Activated CD4-positive, alpha-beta T cell treated with anti-CD3 and anti-CD28 coated beads, Interleukin-2, amount 10 ng/mL, durations not matched to agents 7 days and 5 days (primary cell): ENCODE measurements at regions of chr11 and their contacts with region 1.

Region 1: DNA sequence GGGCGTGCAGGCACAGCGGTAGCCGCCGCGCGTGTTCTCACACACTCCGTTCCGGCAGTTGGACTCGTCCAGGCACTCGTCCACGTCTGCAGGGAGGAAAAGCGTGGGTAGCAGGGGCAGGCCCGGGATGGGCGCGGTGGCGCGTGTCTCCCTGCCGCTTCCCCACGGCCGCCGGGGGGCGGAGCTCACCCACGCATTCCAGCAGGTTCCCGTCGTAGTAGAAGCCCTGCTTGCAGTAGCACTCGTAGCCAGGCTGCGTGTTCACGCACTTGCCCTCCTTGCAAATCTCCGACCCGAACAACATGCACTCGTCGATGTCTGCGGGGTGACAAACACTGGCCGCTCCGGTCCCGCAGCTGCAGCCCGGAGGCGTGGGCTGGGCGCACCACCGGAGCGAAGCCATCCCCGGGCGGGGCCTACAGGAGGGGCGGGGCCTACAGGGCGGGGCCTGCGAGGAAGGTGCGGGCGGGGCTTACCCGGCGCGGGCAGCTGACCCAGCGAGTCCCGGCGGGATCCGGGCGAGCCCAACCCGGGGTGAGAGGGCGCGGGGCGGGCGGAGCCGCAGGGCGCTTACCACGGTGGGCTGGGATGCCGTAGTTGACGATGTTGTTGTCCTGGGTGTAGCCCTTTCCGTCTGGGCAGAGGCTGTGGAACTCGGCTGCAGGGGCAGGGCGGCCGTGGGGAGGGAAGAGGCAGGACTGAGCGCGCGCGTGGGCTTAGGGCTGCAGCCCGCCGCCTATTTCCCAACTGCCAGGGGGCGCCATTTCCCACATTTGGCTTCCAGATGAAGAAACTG is 15.6 kb downstream of the SCYL1 start:
- DNase-seq: peak; percentile 85
- H3K4me3 Mint-ChIP-seq: peak overlapping the region; percentile 78
- H3K27ac Mint-ChIP-seq: peak overlapping the region; percentile 88
- H3K4me1 Mint-ChIP-seq: peaks cover 19% of the 10 kb centered on the region
- H3K27me3 Mint-ChIP-seq: no peaks in the 10 kb centered on the region

Region 2: DNA sequence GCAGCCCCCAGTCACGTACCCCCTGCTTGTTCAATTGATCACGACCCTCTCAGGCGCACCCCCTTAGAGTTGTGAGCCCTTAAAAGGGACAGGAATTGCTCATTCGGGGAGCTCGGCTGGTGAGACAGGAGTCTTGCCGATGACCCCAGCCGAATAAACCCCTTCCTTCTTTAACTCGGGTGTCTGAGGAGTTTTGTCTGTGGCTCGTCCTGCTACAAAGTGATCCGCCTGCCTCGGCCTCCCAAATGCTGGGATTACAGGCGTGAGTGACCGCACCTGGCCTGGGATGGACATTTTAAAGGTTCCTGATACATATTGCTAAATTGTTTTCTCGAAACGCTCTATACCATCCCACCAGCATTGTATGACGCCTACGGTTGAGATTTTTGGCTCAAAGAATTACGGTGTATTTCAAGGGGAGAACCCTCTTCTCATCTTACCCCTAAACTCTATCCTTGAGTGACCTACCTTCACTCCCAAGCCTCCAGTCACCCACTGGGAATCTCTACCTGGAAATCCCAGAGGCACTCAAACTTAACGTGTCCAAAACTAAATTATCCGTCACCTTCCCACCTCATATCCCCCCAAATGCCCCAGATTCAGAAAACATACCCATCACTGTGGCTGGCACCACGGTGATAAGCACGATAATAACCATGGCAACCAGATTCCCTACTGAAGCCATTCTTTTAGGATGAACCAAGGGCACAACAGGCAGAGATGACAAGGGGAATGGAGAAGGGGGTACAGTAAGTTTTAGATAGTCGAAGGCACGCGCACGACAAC is 279.5 kb before region 1 on chr11:
- CTCF ChIA-PET with region 1: no interaction called
- POLR2A ChIA-PET with region 1: no interaction called
- DNase-seq: no peak
- H3K4me3 Mint-ChIP-seq: peak overlapping the region; percentile 97
- H3K27ac Mint-ChIP-seq: peak overlapping the region; percentile 95
- H3K4me1 Mint-ChIP-seq: peaks cover 57% of the 10 kb centered on the region
- H3K27me3 Mint-ChIP-seq: no peaks in the 10 kb centered on the region

Region 3: DNA sequence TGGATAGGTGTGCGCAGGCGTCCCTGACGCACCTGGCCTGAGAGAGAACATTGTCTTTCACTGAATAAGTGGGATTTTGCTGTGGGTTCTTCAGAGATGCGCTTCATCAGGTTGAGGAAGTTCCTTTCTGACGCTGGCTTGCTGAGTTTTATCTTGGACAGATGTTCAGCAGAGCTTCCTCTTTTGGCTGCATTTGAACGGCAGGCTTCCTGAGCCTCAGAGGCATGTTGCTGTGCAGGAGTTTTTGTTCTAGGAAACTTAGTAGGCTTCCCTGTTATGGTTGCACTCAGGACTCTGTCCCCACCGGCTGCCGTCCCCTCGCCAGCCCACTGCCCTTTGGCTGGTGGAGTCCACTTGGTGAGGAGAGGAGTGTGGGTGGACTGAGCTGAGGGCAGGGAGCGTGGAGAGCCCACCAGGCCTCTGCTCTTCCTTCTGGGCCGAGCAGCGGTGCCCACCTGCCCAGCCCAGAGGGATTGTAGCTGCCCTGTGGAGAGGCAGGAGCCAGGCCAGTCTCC is 136.8 kb before region 1 on chr11:
- CTCF ChIA-PET with region 1: no interaction called
- POLR2A ChIA-PET with region 1: no interaction called
- DNase-seq: no peak
- H3K4me3 Mint-ChIP-seq: no peak overlapping the region
- H3K27ac Mint-ChIP-seq: no peak overlapping the region
- H3K4me1 Mint-ChIP-seq: peaks cover 6% of the 10 kb centered on the region
- H3K27me3 Mint-ChIP-seq: no peaks in the 10 kb centered on the region

Region 4: DNA sequence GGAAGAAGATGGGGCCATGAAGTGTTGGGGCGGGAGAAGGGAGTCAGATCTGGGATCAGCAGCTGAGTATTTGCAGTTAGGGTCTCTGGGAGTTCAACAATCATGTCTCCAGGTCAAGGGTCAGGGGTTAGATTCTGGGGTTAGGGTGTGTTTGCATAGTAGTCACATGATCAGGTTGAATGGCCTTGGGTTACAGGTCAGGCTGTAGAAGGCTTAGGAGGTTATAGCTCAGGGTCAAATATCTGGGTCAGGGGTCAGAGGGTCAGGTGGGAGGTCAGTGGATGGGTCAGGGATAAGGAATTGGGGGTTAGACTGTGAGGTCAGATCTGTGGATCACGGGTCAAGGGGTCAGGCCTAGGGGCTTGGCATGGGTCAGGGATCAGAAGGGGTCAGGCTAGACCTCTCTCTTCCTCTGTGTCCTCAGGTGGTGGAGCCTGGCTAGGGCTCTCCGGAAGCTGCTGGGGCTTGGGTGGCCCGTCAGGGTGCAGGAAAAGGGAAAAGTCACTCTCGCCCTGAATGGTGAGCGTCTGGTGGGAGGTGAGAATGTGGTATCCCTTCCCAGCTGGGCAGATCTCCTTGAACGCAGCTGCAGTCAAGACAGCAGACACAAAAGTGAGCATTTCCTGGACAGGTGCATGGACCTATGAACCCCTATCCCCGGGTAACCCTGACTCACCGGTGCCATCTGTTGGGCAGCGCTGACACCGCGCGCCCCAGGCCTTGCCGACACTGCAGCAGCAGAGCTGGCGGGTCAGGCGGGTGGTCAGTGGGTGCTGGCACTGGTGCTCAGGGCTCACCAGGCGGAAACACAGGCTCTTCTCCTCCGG is 11.3 kb after region 1 on chr11:
- CTCF ChIA-PET with region 1: interaction called, 34 read pairs
- POLR2A ChIA-PET with region 1: interaction called, 3 read pairs
- DNase-seq: peak; percentile 71
- H3K4me3 Mint-ChIP-seq: no peak overlapping the region
- H3K27ac Mint-ChIP-seq: peak overlapping the region; percentile 62
- H3K4me1 Mint-ChIP-seq: peaks cover 75% of the 10 kb centered on the region
- H3K27me3 Mint-ChIP-seq: no peaks in the 10 kb centered on the region

Region 5: GRCh38 chr11:65569973-65570918 is 29.8 kb after region 1 on chr11 and contains the start of gene ZNRD2:
- CTCF ChIA-PET with region 1: interaction called, 66 read pairs
- POLR2A ChIA-PET with region 1: no interaction called
- DNase-seq: peak; percentile 98
- H3K4me3 Mint-ChIP-seq: peak within 1 kb of the TSS; percentile 99
- H3K27ac Mint-ChIP-seq: peak within 1 kb of the TSS; percentile 99
- H3K4me1 Mint-ChIP-seq: peaks cover 58% of the 10 kb centered on the region
- H3K27me3 Mint-ChIP-seq: no peaks in the 10 kb centered on the region
- total RNA-seq, gene ZNRD2: 32.4 to 35.4 TPM

Region 6: GRCh38 chr11:65588199-65589054 is 47.9 kb after region 1 on chr11:
- CTCF ChIA-PET with region 1: interaction called, 37 read pairs
- POLR2A ChIA-PET with region 1: no interaction called
- DNase-seq: peak; percentile 82
- H3K4me3 Mint-ChIP-seq: peak overlapping the region; percentile 26
- H3K27ac Mint-ChIP-seq: peak overlapping the region; percentile 86
- H3K4me1 Mint-ChIP-seq: peaks cover 40% of the 10 kb centered on the region
- H3K27me3 Mint-ChIP-seq: no peaks in the 10 kb centered on the region

Region 7: GRCh38 chr11:65615229-65615941 is 74.9 kb after region 1 on chr11 and contains the start of gene PCNX3:
- CTCF ChIA-PET with region 1: interaction called, 11 read pairs
- POLR2A ChIA-PET with region 1: no interaction called
- DNase-seq: peak; percentile 100
- H3K4me3 Mint-ChIP-seq: peak within 1 kb of the TSS; percentile 95
- H3K27ac Mint-ChIP-seq: peak within 1 kb of the TSS; percentile 97
- H3K4me1 Mint-ChIP-seq: peaks cover 50% of the 10 kb centered on the region
- H3K27me3 Mint-ChIP-seq: no peaks in the 10 kb centered on the region
- total RNA-seq, gene PCNX3: 47.7 to 50.2 TPM

Region 8: DNA sequence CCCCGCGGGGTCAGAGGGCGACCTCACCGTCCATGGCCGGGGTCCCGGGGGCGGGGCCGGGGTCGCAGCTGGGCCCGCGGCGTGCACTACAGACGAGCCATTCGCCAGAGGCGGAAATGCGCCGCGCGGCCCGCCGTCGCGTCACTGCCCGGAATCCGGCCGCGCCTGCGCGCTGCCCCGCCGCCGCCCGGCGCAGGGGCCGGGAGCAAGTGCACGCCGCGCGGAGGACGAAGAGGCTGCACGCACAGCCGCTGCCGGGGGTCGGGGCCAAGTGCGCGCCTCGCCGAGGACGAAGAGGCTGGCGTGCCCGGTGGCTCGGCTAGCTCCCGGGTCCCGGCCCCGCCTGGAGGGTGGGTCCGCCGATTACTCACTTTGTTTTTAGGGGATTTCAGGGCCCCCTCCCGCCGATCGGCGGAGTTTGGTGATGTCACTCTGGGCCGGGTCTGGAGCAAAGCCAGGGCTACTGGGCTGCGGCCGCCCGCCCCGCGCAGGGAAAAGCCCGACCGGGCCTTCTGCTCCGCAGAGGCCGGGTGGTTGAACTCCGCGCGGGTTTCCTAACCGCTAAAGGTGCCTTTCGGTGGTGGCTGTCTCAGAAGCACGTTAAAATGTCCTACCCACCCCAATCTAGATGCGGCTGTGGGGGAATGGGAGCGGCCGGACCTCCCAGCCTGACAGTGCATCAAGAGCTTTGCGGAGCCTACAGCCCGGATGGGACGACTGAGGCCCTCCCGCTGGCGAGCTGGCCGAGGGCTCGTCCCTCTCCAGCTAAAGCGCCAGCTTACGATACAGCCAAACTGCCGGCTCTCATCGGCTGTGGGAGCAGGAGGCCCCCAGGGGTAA is 122.5 kb after region 1 on chr11 and contains the start of gene RELA:
- CTCF ChIA-PET with region 1: no interaction called
- POLR2A ChIA-PET with region 1: no interaction called
- DNase-seq: peak; percentile 88
- H3K4me3 Mint-ChIP-seq: peak within 1 kb of the TSS; percentile 83
- H3K27ac Mint-ChIP-seq: peak within 1 kb of the TSS; percentile 91
- H3K4me1 Mint-ChIP-seq: peaks cover 38% of the 10 kb centered on the region
- H3K27me3 Mint-ChIP-seq: no peaks in the 10 kb centered on the region
- total RNA-seq, gene RELA: 76.7 to 79.8 TPM